BJ (cell line): ENCODE measurements at regions of chr1 and their contacts with region 1.

Region 1: GRCh38 chr1:110118636-110119615 is 6.7 kb downstream of the UBL4B start:
- DNase-seq: no peak
- H3K4me3 ChIP-seq: no peak overlapping the region
- H3K27me3 ChIP-seq: no peaks in the 10 kb centered on the region
- CTCF ChIP-seq: no peak

Region 2: GRCh38 chr1:110097887-110098681 is 20.8 kb before region 1 on chr1:
- CTCF ChIA-PET with region 1: interaction called, 18 read pairs
- POLR2A ChIA-PET with region 1: no interaction called
- DNase-seq: no peak
- H3K4me3 ChIP-seq: no peak overlapping the region
- H3K27me3 ChIP-seq: no peaks in the 10 kb centered on the region; the same call in 1 of the 2 replicates
- CTCF ChIP-seq: no peak

Region 3: GRCh38 chr1:110106013-110106941 is 12.6 kb before region 1 on chr1:
- CTCF ChIA-PET with region 1: interaction called, 36 read pairs
- POLR2A ChIA-PET with region 1: no interaction called
- DNase-seq: no peak
- H3K4me3 ChIP-seq: no peak overlapping the region
- H3K27me3 ChIP-seq: no peaks in the 10 kb centered on the region
- CTCF ChIP-seq: peak; percentile 90

Region 4: DNA sequence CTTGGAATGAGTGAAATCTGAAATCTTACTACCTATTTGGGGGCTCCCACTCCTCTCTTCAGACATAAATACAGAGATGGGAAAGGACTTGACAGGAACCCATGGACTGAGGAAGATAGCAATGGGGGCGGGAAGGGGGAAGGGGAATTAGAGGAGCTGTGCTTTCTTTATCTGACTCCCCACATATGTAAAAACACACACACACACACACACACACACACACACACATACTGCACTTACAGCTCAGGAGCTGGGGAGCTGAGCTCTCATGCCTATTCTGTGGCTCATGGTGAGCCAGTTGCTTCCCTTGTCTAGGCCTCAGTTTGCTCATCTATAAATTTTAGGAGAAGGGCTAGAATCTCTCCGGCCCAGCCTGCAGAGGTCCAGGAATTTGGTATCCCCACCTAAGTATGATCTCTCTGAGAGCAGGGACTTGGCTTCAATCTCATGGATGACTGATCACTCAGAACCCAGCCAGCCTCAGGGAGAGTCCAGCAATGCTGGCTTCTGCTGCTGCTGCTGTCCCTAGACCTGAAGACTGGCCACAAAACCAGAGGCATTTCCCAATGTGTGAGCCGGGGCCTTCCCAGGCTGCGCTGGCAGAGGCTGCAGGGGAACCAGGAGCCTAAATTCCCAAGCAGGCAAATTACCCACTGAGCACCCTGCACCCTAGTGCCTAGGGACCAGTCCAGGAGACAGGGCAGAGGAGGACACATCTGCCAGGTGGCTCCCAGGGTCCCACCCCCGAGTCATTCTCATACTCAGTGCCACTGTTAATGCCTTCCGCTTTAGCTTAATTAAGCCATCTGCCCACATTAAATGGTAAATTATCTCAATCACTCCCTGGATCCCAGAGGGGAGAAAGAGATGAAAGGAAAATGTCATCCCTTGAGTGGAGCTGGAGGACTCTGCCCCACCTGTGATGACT is 162.7 kb after region 1 on chr1:
- CTCF ChIA-PET with region 1: no interaction called
- POLR2A ChIA-PET with region 1: no interaction called
- DNase-seq: no peak
- H3K4me3 ChIP-seq: no peak overlapping the region
- H3K27me3 ChIP-seq: peaks cover 1% of the 10 kb centered on the region
- CTCF ChIP-seq: no peak

Region 5: DNA sequence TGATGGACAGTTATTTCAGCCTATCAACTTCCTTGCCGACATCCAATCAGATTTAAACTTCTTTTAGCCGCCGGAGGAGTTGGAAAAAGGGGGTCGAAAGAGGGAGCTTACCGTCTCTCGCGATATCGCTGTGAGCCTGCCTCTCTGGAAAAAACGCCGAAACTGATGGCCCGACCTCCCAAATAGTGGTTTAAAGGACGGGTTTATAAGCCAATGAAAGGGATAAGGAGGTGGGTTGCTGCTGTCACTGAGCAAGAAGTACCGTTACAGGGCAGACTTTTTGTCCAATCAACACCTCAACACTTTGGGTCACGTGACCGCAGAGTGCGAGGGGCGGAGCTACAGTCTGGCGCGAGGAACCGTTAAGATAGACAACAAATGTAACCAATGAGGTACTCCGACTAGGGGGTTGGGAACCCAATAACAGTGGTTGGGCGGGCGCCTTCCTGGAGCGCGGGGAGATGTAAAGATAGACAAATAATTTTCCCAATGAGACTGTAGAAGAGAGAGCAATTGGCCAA is 220.0 kb after region 1 on chr1 and contains the start of gene RBM15:
- CTCF ChIA-PET with region 1: no interaction called
- POLR2A ChIA-PET with region 1: no interaction called
- DNase-seq: peak; percentile 100
- H3K4me3 ChIP-seq: peak within 1 kb of the TSS; percentile 96
- H3K27me3 ChIP-seq: no peaks in the 10 kb centered on the region
- CTCF ChIP-seq: no peak
- polyA plus RNA-seq, gene RBM15: 9.7 and 10.2 TPM in 2 replicates